AG04450 (cell line): ENCODE measurements at regions of chr18 and their contacts with region 1.

Region 1: GRCh38 chr18:21600526-21601410 is at the start of gene ESCO1:
- DNase-seq: peak; percentile 95
- H3K4me3 ChIP-seq: peak within 1 kb of the TSS; percentile 99
- H3K27ac ChIP-seq: peak within 1 kb of the TSS; percentile 97
- H3K27me3 ChIP-seq: no peaks in the 10 kb centered on the region
- CTCF ChIP-seq: peak; percentile 72
- polyA plus RNA-seq, gene ESCO1: 5.6 and 8.9 TPM in 2 replicates

Region 2: DNA sequence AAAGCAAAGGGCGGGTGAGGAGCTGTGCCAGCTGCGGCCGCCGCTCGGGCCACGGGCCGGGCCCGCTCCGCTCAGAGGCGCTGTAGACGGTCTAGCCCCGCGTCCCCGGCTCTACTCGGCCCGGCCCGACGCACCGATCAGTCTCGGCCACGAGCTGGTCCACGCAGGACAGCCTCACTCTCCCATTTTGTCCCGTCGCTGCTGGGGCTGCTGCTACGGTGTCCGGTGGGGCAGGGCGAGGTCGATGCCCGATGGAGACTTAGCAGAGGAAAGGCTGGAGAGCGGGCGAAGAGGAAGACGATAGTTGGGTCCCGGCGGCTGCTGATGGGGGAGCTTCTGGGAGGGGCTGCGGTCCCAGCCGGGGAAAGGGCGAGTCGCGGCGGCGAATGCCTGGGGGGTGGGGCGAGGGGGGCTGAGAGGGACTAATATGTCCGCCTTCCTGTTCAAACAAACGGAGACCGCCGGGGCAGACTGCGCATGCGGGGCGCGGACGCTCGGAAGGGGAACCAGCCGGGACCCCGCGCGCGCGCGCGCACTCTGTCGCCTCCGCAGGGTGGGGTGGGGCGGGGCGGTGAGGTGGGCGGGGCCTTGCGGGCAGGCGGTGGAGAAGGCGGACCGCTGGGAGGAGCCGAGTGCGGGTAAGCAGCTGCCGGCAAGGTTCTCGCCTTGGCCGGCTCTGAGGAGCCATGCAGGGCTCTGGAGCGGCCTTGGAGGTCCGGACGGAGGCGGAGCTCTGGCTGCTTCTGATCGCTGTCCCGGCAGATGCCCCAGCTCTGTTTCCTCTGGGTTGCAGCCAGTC is 489.2 kb before region 1 on chr18 and contains the start of gene ROCK1:
- CTCF ChIA-PET with region 1: no interaction called
- POLR2A ChIA-PET with region 1: no interaction called
- DNase-seq: peak; percentile 95
- H3K4me3 ChIP-seq: peak within 1 kb of the TSS; percentile 98
- H3K27ac ChIP-seq: peak within 1 kb of the TSS; percentile 94
- H3K27me3 ChIP-seq: no peaks in the 10 kb centered on the region
- CTCF ChIP-seq: no peak
- polyA plus RNA-seq, gene ROCK1: 28.5 and 37.2 TPM in 2 replicates

Region 3: DNA sequence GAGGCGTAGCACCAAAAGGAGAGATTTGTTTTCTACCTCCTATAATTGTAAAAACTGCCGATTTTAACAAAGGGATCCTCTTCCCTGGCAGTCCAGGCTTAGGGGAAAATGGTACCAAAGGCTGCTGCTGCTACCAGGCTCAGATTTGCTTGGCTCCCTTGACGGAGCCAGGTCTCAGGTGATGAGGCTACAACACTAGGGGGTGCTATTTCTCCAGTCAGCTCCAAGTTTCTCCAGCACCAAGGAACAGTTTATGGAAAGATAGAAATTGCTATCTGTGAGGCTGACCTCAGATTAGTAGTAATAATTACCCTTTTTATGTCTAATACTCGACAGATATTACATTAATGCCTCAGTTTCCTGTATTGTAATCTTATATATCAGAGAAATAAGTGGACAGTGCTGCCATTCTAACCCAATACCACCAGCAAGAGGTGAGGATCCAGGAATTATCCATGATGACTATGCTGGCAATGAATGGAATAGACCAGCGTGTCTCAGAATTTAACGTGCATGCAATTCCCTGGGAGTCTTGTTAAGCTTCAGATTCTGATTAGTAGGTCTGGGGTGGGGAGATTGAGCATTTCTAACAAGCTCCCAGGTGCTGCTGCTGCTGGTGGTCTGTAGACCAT is 111.5 kb before region 1 on chr18:
- CTCF ChIA-PET with region 1: interaction called, 20 read pairs
- POLR2A ChIA-PET with region 1: no interaction called
- DNase-seq: peak; percentile 13
- H3K4me3 ChIP-seq: no peak overlapping the region
- H3K27ac ChIP-seq: no peak overlapping the region
- H3K27me3 ChIP-seq: peaks cover 2% of the 10 kb centered on the region
- CTCF ChIP-seq: peak; percentile 86

Region 4: GRCh38 chr18:21571772-21572171 is 29.0 kb before region 1 on chr18:
- CTCF ChIA-PET with region 1: interaction called, 11 read pairs
- POLR2A ChIA-PET with region 1: interaction called, 3 read pairs
- DNase-seq: no peak
- H3K4me3 ChIP-seq: no peak overlapping the region
- H3K27ac ChIP-seq: no peak overlapping the region
- H3K27me3 ChIP-seq: no peaks in the 10 kb centered on the region
- CTCF ChIP-seq: no peak

Region 5: GRCh38 chr18:21612125-21612991 is 11.6 kb after region 1 on chr18 and contains the start of gene SNRPD1:
- CTCF ChIA-PET with region 1: interaction called, 138 read pairs
- POLR2A ChIA-PET with region 1: interaction called, 7 read pairs
- DNase-seq: peak; percentile 77
- H3K4me3 ChIP-seq: peak within 1 kb of the TSS; percentile 91
- H3K27ac ChIP-seq: peak within 1 kb of the TSS; percentile 43
- H3K27me3 ChIP-seq: no peaks in the 10 kb centered on the region
- CTCF ChIP-seq: peak; percentile 98
- polyA plus RNA-seq, gene SNRPD1: 38.8 and 43.5 TPM in 2 replicates

Region 6: GRCh38 chr18:21904856-21905255 is 304.1 kb after region 1 on chr18:
- CTCF ChIA-PET with region 1: no interaction called
- POLR2A ChIA-PET with region 1: no interaction called
- DNase-seq: no peak
- H3K4me3 ChIP-seq: no peak overlapping the region
- H3K27ac ChIP-seq: no peak overlapping the region
- H3K27me3 ChIP-seq: peaks cover 16% of the 10 kb centered on the region
- CTCF ChIP-seq: no peak

Region 7: DNA sequence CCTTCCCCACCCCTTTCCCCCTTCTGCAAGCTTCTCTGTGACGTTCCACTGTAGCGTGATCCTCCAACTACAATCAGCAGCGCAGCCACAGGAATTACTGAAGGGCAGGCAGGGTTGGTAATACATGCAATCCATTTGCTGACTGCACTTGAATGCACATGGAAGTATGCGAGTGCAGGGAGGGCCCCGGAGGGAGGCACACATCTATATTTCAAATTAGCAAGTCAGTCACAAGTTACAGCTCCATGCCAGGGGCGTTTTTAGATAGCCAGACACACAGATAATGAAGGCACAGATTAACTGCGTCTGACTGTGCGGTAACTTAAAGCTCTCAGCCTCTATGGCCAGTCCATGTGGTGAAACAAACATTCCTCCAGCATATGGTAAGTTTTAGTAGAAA is 359.4 kb after region 1 on chr18:
- CTCF ChIA-PET with region 1: no interaction called
- POLR2A ChIA-PET with region 1: no interaction called
- DNase-seq: no peak
- H3K4me3 ChIP-seq: no peak overlapping the region
- H3K27ac ChIP-seq: no peak overlapping the region
- H3K27me3 ChIP-seq: peaks cover 6% of the 10 kb centered on the region
- CTCF ChIP-seq: no peak